PC-9 (cell line): ENCODE measurements at regions of chrX and their contacts with region 1.

Region 1: GRCh38 chrX:102988517-102988916 is 51.4 kb downstream of the RAB40AL start:
- DNase-seq: no peak
- H3K4me3 ChIP-seq: no peak overlapping the region
- H3K27ac ChIP-seq: no peak overlapping the region
- H3K4me1 ChIP-seq: no peaks in the 10 kb centered on the region
- H3K27me3 ChIP-seq: no peaks in the 10 kb centered on the region
- CTCF ChIP-seq: no peak

Region 2: DNA sequence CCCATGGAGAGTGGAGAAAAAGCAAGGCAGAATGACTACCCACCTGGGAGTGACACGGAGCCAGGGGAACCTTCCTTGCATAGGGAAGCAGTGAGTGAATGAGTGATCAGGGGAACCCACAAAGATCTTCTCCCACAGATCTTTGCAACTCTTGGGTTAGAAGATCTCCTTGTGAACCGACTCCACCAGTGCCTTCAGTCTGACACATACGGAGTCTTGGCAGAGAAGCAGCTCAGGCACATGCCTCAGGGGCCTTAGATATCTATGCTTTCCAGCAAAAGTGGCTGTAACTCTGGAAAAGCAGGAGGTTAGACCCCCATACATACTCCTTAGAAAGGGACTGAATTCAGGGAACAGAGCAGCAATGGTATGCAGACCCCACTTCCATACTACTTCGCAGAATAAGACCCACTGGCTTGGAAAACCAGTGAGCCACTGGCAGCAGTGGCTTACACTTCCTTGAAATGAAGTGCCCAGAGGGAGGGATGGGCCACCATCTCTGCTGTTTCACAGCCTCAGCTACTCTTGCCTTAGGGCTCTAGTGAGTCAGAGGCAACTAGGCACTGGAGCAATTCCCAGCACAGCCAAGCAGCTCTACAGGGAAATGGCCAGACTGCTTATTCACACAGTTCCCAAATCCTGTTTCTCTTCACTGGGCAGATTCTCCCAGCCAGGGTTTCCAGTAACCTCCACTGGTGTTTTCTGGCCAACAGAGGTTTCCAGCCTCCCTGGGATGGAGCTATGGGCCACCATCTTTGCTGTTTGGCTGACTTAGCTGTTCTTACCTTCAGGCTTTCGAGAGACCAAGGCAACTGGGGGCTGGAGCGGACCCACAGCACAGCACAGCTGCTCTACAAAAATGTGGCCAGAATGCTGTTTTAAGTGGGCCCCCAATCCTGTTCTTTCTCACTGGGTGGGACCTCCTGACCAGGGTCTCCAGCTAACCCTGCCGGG is 945.9 kb before region 1 on chrX:
- CTCF ChIA-PET with region 1: no interaction called
- POLR2A ChIA-PET with region 1: no interaction called
- intact Hi-C with region 1: no loop called
- DNase-seq: no peak
- H3K4me3 ChIP-seq: no peak overlapping the region
- H3K27ac ChIP-seq: no peak overlapping the region
- H3K4me1 ChIP-seq: no peaks in the 10 kb centered on the region
- H3K27me3 ChIP-seq: no peaks in the 10 kb centered on the region
- CTCF ChIP-seq: no peak

Region 3: DNA sequence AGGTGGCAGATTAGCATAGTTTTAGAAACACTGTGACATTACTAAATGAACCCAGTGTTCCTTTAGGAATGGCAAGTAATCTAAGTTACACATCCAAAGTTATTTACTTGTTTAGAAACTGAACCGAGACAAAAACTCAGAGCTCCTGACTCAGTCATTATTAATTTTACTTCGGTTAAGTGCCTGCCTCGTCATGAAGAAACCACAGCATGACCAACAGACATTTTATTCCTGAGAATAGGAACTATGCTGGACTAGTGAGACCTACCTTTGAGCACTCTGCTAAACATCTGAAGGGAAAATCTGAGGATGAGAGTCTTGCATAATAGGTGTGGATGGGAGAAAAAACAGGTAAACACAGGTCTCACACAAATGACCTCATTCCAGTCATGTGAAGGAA is 73.0 kb after region 1 on chrX:
- CTCF ChIA-PET with region 1: no interaction called
- POLR2A ChIA-PET with region 1: no interaction called
- intact Hi-C with region 1: loop called (anchors 2 kb)
- DNase-seq: no peak
- H3K4me3 ChIP-seq: no peak overlapping the region
- H3K27ac ChIP-seq: no peak overlapping the region
- H3K4me1 ChIP-seq: no peaks in the 10 kb centered on the region
- H3K27me3 ChIP-seq: peaks cover 7% of the 10 kb centered on the region; the same call in 1 of the 2 replicates
- CTCF ChIP-seq: no peak

Region 4: DNA sequence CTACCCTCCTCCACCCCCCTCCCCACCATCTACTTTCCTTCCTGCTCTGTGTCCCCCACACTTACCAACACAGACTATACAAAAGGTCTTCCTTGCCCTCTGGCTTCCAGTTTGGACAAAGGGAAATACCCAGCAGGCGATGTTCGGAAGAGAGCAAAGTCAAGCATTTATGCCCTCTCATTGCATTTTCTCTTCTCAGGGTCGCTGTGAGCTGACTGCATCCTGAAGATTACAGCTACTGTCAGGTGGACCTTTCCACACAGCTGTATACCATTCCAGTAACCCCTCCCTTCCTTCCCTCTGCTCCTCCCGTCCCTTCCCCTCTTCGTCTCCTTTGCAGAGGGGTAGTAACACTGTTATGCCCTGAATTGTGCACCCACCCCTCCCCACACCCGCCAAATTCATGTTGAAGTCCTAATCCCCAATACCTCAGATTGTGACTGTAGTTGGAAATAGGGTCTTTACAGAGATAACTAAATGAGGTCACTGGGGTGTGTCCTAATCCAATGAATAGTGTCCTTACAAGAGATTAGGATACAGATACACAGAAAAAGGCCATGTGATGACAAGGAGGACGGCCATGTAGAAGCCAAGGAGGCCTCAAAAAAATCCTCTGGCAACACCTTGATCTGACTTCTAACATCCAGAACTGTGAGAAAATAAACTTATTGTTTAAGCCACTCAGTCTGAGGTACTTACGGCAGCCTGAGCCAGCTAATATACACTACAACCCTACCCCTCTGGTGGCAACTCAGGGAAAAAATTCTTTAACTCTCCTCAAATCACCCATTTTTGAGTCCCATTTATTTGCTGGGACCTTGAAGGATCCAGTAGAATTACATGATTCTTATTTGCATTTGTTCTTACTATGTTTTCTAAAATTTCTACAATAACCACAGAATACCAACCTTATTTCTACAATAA is 686.3 kb after region 1 on chrX:
- CTCF ChIA-PET with region 1: no interaction called
- POLR2A ChIA-PET with region 1: no interaction called
- intact Hi-C with region 1: no loop called
- DNase-seq: no peak
- H3K4me3 ChIP-seq: no peak overlapping the region
- H3K27ac ChIP-seq: no peak overlapping the region
- H3K4me1 ChIP-seq: no peaks in the 10 kb centered on the region
- H3K27me3 ChIP-seq: no peaks in the 10 kb centered on the region
- CTCF ChIP-seq: no peak

Region 5: GRCh38 chrX:103730796-103731493 is 742.4 kb after region 1 on chrX:
- CTCF ChIA-PET with region 1: no interaction called
- POLR2A ChIA-PET with region 1: no interaction called
- intact Hi-C with region 1: no loop called
- DNase-seq: no peak
- H3K4me3 ChIP-seq: no peak overlapping the region
- H3K27ac ChIP-seq: no peak overlapping the region
- H3K4me1 ChIP-seq: no peaks in the 10 kb centered on the region
- H3K27me3 ChIP-seq: 0 out of 2 replicates have a peak, but pooled peaks cover 3% of the 10 kb centered on the region
- CTCF ChIP-seq: no peak

Region 6: GRCh38 chrX:103918581-103919269 is 930.2 kb after region 1 on chrX:
- CTCF ChIA-PET with region 1: no interaction called
- POLR2A ChIA-PET with region 1: no interaction called
- intact Hi-C with region 1: no loop called
- DNase-seq: peak in 1 of 2 experiments; percentile 6
- H3K4me3 ChIP-seq: no peak overlapping the region
- H3K27ac ChIP-seq: no peak overlapping the region
- H3K4me1 ChIP-seq: no peaks in the 10 kb centered on the region
- H3K27me3 ChIP-seq: peaks cover 16% of the 10 kb centered on the region
- CTCF ChIP-seq: no peak